Dorsolateral prefrontal cortex (tissue), 120 donors: ENCODE measurements at regions of chr7 and their contacts with region 1.

Region 1: GRCh38 chr7:129367700-129368388 is 66.4 kb upstream of the STRIP2 start:
- DNase-seq: peak; percentile 66 to 87 (median 77)
- H3K4me3 ChIP-seq: peak overlapping the region in 35 of 59 donors; percentile 3 to 50 (median 24)
- H3K27ac ChIP-seq: peak overlapping the region in 39 of 59 donors; percentile 4 to 75 (median 54)
- H3K27me3 ChIP-seq: no peaks in the 10 kb centered on the region
- CTCF ChIP-seq: peak; percentile 71 to 97 (median 92)

Region 2: DNA sequence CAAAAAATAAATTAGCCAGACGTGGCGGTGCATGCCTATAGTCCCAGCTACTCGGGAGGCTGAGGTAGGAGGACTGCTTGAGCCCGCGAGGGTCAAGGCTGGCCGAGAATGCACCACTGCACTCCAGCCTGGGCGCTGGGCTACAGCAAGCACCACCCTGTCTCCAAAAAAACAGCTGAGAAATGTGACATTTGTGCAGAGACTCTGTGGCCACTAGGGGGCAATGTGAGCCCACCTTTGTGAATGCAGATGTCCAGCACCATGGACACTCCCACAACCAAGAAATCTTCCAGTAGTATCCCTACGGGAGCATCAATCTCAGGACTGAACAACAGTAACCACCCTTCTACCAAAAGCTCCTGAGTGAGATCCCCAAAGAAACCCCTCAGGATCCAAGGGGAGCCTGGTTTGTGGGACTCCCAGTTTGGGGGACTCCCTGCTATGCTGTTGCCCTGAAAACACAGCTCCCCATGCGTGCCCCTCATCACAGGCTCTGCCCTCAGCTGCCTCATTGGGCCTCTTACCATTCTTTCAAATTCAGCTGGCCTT is 149.3 kb before region 1 on chr7:
- intact Hi-C with region 1: loop called in 1 of 2 experiments (anchors 10 kb)
- DNase-seq: peak; percentile 74 to 92 (median 84)
- H3K4me3 ChIP-seq: peak overlapping the region in 22 of 59 donors; percentile 0 to 55 (median 20)
- H3K27ac ChIP-seq: no peak overlapping the region
- H3K27me3 ChIP-seq: no peaks in the 10 kb centered on the region
- CTCF ChIP-seq: peak; percentile 83 to 98 (median 95)

Region 3: GRCh38 chr7:129252128-129252527 is 115.7 kb before region 1 on chr7:
- intact Hi-C with region 1: no loop called
- DNase-seq: no peak
- H3K4me3 ChIP-seq: no peak overlapping the region
- H3K27ac ChIP-seq: peak overlapping the region in 1 of 59 donors; percentile 5
- H3K27me3 ChIP-seq: no peaks in the 10 kb centered on the region
- CTCF ChIP-seq: no peak

Region 4: DNA sequence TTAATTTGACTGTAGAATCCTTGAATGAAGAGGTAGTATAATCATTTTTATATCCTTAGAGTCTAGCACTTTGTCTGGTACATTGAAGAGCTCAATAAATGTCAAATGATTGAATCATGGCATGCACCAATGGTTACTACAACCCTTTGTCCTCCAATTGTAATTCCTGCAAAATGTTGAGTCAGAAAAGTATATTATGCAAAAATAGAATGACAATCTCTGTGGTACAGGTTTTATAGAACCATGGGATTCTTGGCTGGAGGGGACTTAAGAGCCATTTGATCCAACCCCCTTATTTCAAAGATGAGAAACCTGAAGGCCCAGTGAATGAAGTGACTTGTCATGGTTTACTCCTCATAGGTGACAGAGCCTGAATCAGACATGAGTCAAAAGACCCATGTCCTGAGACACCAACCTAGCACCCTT is 103.6 kb after region 1 on chr7:
- intact Hi-C with region 1: loop called (anchors 2 to 5 kb)
- DNase-seq: no peak
- H3K4me3 ChIP-seq: no peak overlapping the region
- H3K27ac ChIP-seq: peak overlapping the region in 1 of 59 donors; percentile 10
- H3K27me3 ChIP-seq: no peaks in the 10 kb centered on the region
- CTCF ChIP-seq: no peak

Region 5: GRCh38 chr7:129644634-129645230 is 276.9 kb after region 1 on chr7:
- intact Hi-C with region 1: loop called (anchors 2 kb)
- DNase-seq: no peak
- H3K4me3 ChIP-seq: no peak overlapping the region
- H3K27ac ChIP-seq: no peak overlapping the region
- H3K27me3 ChIP-seq: no peaks in the 10 kb centered on the region
- CTCF ChIP-seq: peak; percentile 36 to 81 (median 64)

Region 6: GRCh38 chr7:130010689-130011412 is 643.0 kb after region 1 on chr7:
- intact Hi-C with region 1: loop called in 1 of 2 experiments (anchors 10 kb)
- DNase-seq: peak; percentile 55 to 91 (median 72)
- H3K4me3 ChIP-seq: no peak overlapping the region
- H3K27ac ChIP-seq: no peak overlapping the region
- H3K27me3 ChIP-seq: no peaks in the 10 kb centered on the region
- CTCF ChIP-seq: peak; percentile 76 to 94 (median 90)